ENCODE measurements at regions of chr10 and their contacts with region 1.

Region 1: GRCh38 chr10:79374312-79375191 is 27.3 kb downstream of the PPIF start:
- DNase-seq: peak; percentile 66
- H3K4me3 ChIP-seq: no peak overlapping the region
- H3K27ac ChIP-seq: no peak overlapping the region
- H3K27me3 ChIP-seq: no peaks in the 10 kb centered on the region
- CTCF ChIP-seq: peak; percentile 97

Region 2: DNA sequence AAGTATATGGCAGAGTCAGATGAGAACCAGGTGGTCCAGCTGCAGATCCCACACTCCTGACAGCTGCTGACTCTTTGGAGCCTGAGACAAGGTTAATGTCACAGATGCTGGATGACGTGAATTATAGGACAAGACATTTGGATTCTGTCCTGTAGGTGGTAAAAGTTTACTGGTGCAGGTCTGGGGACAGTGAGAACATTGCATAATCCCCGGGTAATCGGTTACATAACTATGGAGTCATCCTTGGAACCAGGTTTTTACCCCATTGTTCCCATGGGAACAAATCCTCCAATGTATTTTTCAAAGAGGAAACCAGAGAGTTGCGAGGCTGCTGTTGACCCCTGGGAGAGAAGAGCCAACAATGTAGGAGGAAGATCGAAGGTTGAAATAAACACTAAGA is 98.4 kb after region 1 on chr10:
- in situ Hi-C with region 1: loop called (anchors 10 kb)
- DNase-seq: no peak
- H3K4me3 ChIP-seq: no peak overlapping the region
- H3K27ac ChIP-seq: no peak overlapping the region
- H3K27me3 ChIP-seq: no peaks in the 10 kb centered on the region
- CTCF ChIP-seq: no peak

Measured in brain microvascular endothelial cell (primary cell).